MCF 10A (cell line): ENCODE measurements at regions of chr11 and their contacts with region 1.

Region 1: GRCh38 chr11:65506770-65507505 is 8.1 kb downstream of the MALAT1 start:
- DNase-seq: peak; percentile 70
- H3K4me3 Mint-ChIP-seq: no peak overlapping the region
- H3K27ac Mint-ChIP-seq: no peak overlapping the region
- H3K4me1 Mint-ChIP-seq: peaks cover 22% of the 10 kb centered on the region
- H3K27me3 Mint-ChIP-seq: no peaks in the 10 kb centered on the region
- CTCF ChIP-seq: no peak

Region 2: DNA sequence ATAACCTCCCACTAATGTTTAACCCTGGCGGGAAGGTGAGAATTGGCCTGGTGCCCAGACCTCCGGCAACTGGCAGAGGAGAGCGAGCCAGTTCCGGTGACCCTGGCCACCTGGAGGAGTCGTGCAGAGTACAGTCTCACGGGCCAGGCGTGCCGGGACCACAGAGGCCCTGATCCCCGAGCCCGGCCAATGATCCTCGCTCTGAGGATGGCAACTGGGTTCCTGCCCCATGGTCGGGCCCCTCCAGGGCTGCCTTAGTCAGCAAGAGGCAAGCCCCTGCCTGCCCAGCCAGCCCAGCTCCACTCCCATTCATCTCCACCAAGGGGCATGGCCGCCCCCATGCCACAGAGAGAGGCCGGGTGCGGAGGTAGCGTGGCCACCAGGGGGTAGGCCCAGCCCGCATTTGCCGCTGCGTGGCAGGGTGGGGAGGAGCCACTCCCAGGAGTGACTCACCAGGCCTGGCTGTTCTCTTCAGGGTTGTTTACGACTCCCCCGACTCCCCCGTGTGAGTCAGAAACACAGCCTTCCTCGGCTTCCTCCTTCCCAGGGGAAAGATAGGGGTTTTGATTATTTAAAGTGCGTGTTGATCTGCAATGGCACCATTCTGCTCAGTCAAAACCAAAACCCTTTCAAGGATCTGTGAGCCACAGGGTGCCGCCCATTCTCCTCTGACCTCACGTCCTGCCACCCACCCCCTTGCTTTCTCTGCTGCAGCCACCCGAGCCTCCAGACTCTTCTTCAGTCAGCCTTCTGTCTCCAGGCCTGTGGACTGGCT is 124.7 kb before region 1 on chr11 and contains the start of gene SLC25A45:
- CTCF ChIA-PET with region 1: interaction called, 6 read pairs
- POLR2A ChIA-PET with region 1: interaction called, 342 read pairs
- intact Hi-C with region 1: loop called (anchors 1 kb)
- DNase-seq: peak; percentile 99
- H3K4me3 Mint-ChIP-seq: peak within 1 kb of the TSS; percentile 68
- H3K27ac Mint-ChIP-seq: peak within 1 kb of the TSS; percentile 97
- H3K4me1 Mint-ChIP-seq: peaks cover 26% of the 10 kb centered on the region
- H3K27me3 Mint-ChIP-seq: no peaks in the 10 kb centered on the region
- CTCF ChIP-seq: peak; percentile 86
- total RNA-seq, gene SLC25A45: 3.9 and 4.9 TPM in 2 replicates

Region 3: GRCh38 chr11:65448418-65449105 is 58.4 kb before region 1 on chr11:
- CTCF ChIA-PET with region 1: interaction called, 11 read pairs
- POLR2A ChIA-PET with region 1: interaction called, 213 read pairs
- intact Hi-C with region 1: no loop called
- DNase-seq: peak; percentile 71
- H3K4me3 Mint-ChIP-seq: no peak overlapping the region
- H3K27ac Mint-ChIP-seq: peak overlapping the region; percentile 93
- H3K4me1 Mint-ChIP-seq: peaks cover 21% of the 10 kb centered on the region
- H3K27me3 Mint-ChIP-seq: no peaks in the 10 kb centered on the region
- CTCF ChIP-seq: no peak

Region 4: GRCh38 chr11:65477149-65477965 is 29.6 kb before region 1 on chr11:
- CTCF ChIA-PET with region 1: interaction called, 13 read pairs
- POLR2A ChIA-PET with region 1: interaction called, 2,284 read pairs
- intact Hi-C with region 1: no loop called
- DNase-seq: peak; percentile 96
- H3K4me3 Mint-ChIP-seq: peak overlapping the region; percentile 95
- H3K27ac Mint-ChIP-seq: peak overlapping the region; percentile 95
- H3K4me1 Mint-ChIP-seq: peaks cover 16% of the 10 kb centered on the region
- H3K27me3 Mint-ChIP-seq: no peaks in the 10 kb centered on the region
- CTCF ChIP-seq: no peak

Region 5: DNA sequence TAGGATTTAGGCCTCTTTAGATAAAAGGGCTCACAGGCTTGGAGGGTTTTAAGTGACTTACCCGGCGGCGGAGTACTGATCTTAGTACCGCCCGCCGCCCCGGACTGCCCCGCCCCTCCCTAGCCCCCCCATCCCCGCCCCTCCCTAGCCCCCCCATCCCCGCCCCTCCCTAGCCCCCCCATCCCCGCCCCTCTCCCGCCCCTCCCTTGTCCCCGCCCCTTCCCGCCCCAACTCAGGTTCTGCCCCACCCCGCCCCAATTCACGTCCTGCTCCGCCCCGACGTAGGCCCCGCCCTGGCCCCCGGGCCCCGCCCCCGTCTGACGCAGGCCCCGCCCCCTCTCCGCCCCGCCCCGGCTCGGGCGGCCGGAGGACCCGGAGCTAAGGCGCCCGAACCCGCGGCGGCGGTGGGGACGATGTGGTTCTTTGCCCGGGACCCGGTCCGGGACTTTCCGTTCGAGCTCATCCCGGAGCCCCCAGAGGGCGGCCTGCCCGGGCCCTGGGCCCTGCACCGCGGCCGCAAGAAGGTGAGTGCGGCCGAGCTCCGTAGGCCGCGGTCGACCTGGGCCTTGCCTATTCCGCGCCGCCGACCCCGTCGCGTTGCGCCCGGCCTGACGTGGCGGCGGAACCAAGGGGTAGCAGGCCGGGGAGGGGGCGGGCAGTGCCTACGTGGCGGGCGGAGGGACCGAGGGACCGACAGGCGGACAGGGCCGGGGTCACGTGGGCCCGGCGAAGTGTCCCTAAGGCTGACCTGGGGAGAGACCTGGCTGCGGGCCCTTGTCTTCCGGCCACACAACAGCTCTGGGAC is 18.0 kb after region 1 on chr11 and contains the start of gene SCYL1:
- CTCF ChIA-PET with region 1: interaction called, 6 read pairs
- POLR2A ChIA-PET with region 1: interaction called, 17 read pairs
- intact Hi-C with region 1: no loop called
- DNase-seq: peak; percentile 71
- H3K4me3 Mint-ChIP-seq: peak within 1 kb of the TSS; percentile 88
- H3K27ac Mint-ChIP-seq: peak within 1 kb of the TSS; percentile 90
- H3K4me1 Mint-ChIP-seq: peaks cover 10% of the 10 kb centered on the region
- H3K27me3 Mint-ChIP-seq: no peaks in the 10 kb centered on the region
- CTCF ChIP-seq: no peak
- total RNA-seq, gene SCYL1: 70.9 and 75.5 TPM in 2 replicates